AG04449 (cell line): ENCODE measurements at regions of chr4 and their contacts with region 1.

Region 1: DNA sequence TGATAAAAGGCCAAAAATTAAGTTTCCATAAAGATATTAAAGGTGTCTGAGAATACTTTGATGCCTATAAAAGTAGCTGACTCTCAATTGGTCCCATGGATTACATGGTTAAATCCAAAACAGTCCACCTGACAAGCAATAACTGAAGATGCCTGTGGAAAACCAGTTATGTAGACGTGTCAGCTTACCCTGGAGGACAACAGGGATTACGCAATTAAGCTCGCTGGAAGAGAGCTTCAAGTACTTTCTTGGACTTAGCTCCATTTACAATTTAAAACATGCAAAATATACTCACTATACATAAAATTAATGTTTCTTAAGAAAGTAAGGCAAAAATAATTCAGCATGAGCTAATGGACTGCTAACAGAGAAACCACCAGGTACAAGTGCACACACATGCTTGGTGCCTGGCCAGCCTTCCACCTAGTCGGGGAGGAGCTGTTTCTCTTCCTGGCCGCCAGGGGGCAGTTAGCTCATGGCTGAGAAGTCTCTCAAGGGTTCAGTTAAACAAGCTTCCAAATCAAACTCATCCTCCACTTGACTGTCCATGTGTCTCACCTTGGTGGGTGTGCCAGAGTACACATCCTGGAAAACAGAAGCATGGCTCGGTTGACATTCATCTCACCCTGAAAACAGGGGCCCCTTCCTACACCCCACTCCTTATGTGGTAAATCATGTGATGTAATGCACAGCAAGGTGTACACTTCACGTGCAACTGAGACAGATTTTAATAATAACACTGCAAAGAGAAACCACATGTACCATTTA is 9.2 kb upstream of the FAM53A start:
- DNase-seq: no peak
- H3K4me3 ChIP-seq: no peak overlapping the region
- CTCF ChIP-seq: peak; percentile 93

Region 2: GRCh38 chr4:1628892-1629698 is 64.2 kb before region 1 on chr4:
- CTCF ChIA-PET with region 1: interaction called, 11 read pairs
- POLR2A ChIA-PET with region 1: no interaction called
- DNase-seq: no peak
- H3K4me3 ChIP-seq: no peak overlapping the region
- CTCF ChIP-seq: peak; percentile 97

Region 3: GRCh38 chr4:1706358-1706757 is 13.0 kb after region 1 on chr4:
- CTCF ChIA-PET with region 1: interaction called, 195 read pairs
- POLR2A ChIA-PET with region 1: interaction called, 3 read pairs
- DNase-seq: no peak
- H3K4me3 ChIP-seq: no peak overlapping the region
- CTCF ChIP-seq: no peak

Region 4: GRCh38 chr4:1721004-1721665 is 27.8 kb after region 1 on chr4 and contains the starts of genes TACC3 and TMEM129:
- CTCF ChIA-PET with region 1: interaction called, 268 read pairs
- POLR2A ChIA-PET with region 1: interaction called, 3 read pairs
- DNase-seq: no peak
- H3K4me3 ChIP-seq: peak within 1 kb of the TSS; percentile 81
- CTCF ChIP-seq: no peak

Region 5: GRCh38 chr4:1809754-1810511 is 116.6 kb after region 1 on chr4:
- CTCF ChIA-PET with region 1: interaction called, 50 read pairs
- POLR2A ChIA-PET with region 1: no interaction called
- DNase-seq: no peak
- H3K4me3 ChIP-seq: no peak overlapping the region
- CTCF ChIP-seq: peak; percentile 97